Naive thymus-derived CD4-positive, alpha-beta T cell (primary cell): ENCODE measurements at regions of chr15 and their contacts with region 1.

Region 1: GRCh38 chr15:78709263-78709882 is 68.4 kb upstream of the CHRNB4 start:
- DNase-seq: peak; percentile 20 to 70 (median 50)
- ATAC-seq: peak; percentile 94
- H3K4me3 ChIP-seq: no peak overlapping the region
- H3K4me3 Mint-ChIP-seq: peak overlapping the region in 6 of 10 donors; percentile 6 to 64 (median 38)
- H3K27ac ChIP-seq: no peak overlapping the region
- H3K27ac Mint-ChIP-seq: peak overlapping the region in 1 of 9 donors; percentile 26
- H3K4me1 ChIP-seq: no peaks in the 10 kb centered on the region
- H3K4me1 Mint-ChIP-seq: peaks cover 0 to 12% (median 7%) of the 10 kb centered on the region in 7 donors
- H3K27me3 ChIP-seq: peaks cover 0 to 7% of the 10 kb centered on the region in 2 donors
- H3K27me3 Mint-ChIP-seq: peaks cover 31 to 42% (median 39%) of the 10 kb centered on the region in 5 donors

Region 2: GRCh38 chr15:78308422-78309032 is 400.8 kb before region 1 on chr15:
- CTCF ChIA-PET with region 1: no interaction called
- POLR2A ChIA-PET with region 1: no interaction called
- intact Hi-C with region 1: loop called (anchors 2 to 10 kb)
- DNase-seq: peak in 5 of 9 donors; percentile 11 to 53 (median 20)
- ATAC-seq: peak; percentile 76
- H3K4me3 ChIP-seq: no peak overlapping the region
- H3K4me3 Mint-ChIP-seq: no peak overlapping the region
- H3K27ac ChIP-seq: no peak overlapping the region
- H3K27ac Mint-ChIP-seq: no peak overlapping the region
- H3K4me1 ChIP-seq: no peaks in the 10 kb centered on the region
- H3K4me1 Mint-ChIP-seq: no peaks in the 10 kb centered on the region
- H3K27me3 ChIP-seq: no peaks in the 10 kb centered on the region
- H3K27me3 Mint-ChIP-seq: peaks cover 0 to 14% (median 10%) of the 10 kb centered on the region in 5 donors

Region 3: GRCh38 chr15:78618490-78618934 is 90.9 kb before region 1 on chr15:
- CTCF ChIA-PET with region 1: interaction called, 3 read pairs
- POLR2A ChIA-PET with region 1: no interaction called
- intact Hi-C with region 1: loop called (anchors 1 kb)
- DNase-seq: peak; percentile 46 to 78 (median 66)
- ATAC-seq: peak; percentile 62
- H3K4me3 ChIP-seq: no peak overlapping the region
- H3K4me3 Mint-ChIP-seq: peak overlapping the region in 9 of 10 donors; percentile 20 to 66 (median 56)
- H3K27ac ChIP-seq: no peak overlapping the region
- H3K27ac Mint-ChIP-seq: no peak overlapping the region
- H3K4me1 ChIP-seq: no peaks in the 10 kb centered on the region
- H3K4me1 Mint-ChIP-seq: peaks cover 5 to 21% (median 10%) of the 10 kb centered on the region in 7 donors
- H3K27me3 ChIP-seq: peaks cover 0 to 8% of the 10 kb centered on the region in 2 donors
- H3K27me3 Mint-ChIP-seq: peaks cover 33 to 53% (median 40%) of the 10 kb centered on the region in 5 donors

Region 4: DNA sequence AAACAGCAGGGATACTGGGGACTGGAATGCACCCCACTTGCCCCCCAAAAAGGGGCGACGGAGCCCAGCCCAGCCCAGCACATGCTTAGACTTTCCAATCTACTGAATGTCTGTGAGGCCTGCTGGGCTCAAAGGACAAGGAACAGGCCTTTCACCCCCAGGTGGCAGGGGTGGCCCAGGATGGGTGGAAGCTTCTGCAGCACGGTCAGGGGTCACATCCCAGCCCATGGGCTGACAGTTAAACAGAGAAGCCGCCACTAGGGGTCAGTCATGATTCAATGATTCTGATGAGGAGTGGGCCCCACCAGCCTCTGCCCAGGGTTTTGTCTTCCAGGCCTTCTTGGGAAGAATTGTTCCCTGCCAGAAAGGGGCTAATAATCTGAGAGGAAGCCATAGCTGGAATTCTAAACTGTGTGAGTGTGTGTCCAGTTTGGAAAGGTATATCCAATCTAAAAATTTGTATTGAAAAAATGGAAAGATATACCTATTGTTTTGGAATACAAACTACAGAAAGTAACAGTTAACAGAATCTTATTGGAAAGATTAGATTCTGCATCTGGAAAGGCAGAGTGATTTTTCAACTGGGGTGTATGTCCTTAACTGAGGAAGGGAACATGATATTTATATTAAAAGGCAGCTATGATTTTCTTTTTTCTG is 70.6 kb before region 1 on chr15:
- CTCF ChIA-PET with region 1: interaction called, 7 read pairs
- POLR2A ChIA-PET with region 1: no interaction called
- intact Hi-C with region 1: loop called (anchors 1 kb)
- DNase-seq: peak in 5 of 9 donors; percentile 22 to 45 (median 35)
- ATAC-seq: peak; percentile 45
- H3K4me3 ChIP-seq: no peak overlapping the region
- H3K4me3 Mint-ChIP-seq: no peak overlapping the region
- H3K27ac ChIP-seq: no peak overlapping the region
- H3K27ac Mint-ChIP-seq: no peak overlapping the region
- H3K4me1 ChIP-seq: no peaks in the 10 kb centered on the region
- H3K4me1 Mint-ChIP-seq: peaks cover 0 to 14% (median 9%) of the 10 kb centered on the region in 7 donors
- H3K27me3 ChIP-seq: peaks cover 0 to 3% of the 10 kb centered on the region in 2 donors
- H3K27me3 Mint-ChIP-seq: peaks cover 15 to 31% (median 18%) of the 10 kb centered on the region in 5 donors

Region 5: DNA sequence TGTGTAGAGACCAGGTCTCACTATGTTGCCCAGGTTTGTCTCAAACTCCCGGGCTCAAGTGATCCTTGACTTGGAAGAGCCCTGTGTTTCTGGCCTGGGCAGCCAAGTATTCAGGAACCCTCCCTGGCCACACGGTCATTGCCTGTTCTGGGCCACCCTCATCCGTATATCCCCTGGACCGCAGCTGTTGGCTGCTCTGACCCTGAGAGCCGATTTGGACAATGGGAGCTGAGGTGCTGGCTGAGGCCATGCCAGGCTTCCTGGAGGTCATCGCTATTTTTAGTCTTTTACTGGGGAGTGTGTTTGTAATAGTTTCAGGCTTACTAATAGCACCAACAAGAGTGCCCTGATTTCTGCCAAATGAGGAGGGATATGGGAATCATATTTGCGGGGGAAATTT is 41.2 kb after region 1 on chr15:
- CTCF ChIA-PET with region 1: no interaction called
- POLR2A ChIA-PET with region 1: no interaction called
- intact Hi-C with region 1: loop called in 1 of 2 experiments (anchors 1 kb)
- DNase-seq: no peak
- ATAC-seq: no peak
- H3K4me3 ChIP-seq: no peak overlapping the region
- H3K4me3 Mint-ChIP-seq: peak overlapping the region; percentile 29 to 76 (median 58)
- H3K27ac ChIP-seq: no peak overlapping the region
- H3K27ac Mint-ChIP-seq: peak overlapping the region in 2 of 9 donors; percentile 22 to 43
- H3K4me1 ChIP-seq: peaks cover 0 to 6% of the 10 kb centered on the region in 2 donors
- H3K4me1 Mint-ChIP-seq: peaks cover 4 to 6% (median 5%) of the 10 kb centered on the region in 7 donors
- H3K27me3 ChIP-seq: no peaks in the 10 kb centered on the region
- H3K27me3 Mint-ChIP-seq: no peaks in the 10 kb centered on the region